H1 (cell line): ENCODE measurements at regions of chr7 and their contacts with region 1.

Region 1: DNA sequence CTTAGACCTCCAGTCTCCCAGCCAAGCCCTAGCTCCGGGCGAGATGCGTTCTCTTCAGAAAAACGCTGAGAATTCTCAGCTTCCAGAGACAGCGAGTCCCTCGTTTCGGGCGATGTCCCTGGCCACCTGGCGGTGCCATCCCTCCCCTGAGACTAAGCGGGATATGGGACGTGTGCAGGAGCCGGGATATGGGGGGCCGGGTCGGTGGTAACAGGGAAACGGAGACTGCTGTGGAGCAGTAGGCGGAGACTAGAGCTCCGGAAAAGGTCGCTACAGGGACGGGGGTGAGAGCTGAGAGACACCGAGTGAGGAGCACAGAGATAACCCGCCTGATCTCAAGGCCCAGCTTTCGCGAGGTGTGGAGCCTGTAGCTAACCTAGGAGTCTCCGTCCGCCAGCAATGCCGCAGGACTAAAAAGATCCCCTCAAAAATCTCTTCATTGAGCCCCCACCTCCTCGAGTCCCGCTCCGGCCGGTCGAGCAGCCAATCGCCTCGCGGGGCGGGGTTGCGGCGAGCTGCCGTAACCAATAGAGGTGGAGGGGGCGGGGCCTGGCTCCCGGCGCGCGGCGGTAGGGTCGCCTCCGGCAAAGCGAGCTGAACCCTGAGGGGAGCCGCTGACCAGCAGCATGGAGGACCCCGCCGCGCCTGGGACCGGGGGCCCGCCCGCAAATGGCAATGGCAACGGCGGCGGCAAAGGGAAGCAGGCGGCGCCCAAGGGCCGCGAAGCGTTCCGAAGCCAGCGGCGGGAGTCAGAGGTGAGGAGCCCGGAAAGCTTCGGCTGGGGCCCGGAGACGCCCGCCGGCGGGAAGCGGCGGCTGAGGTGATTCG is at the start of gene STRIP2:
- DNase-seq: peak; percentile 81 to 99
- H3K4me3 ChIP-seq: peak within 1 kb of the TSS; percentile 74 to 85 (median 76)
- H3K27ac ChIP-seq: 0 out of 2 replicates have a peak within 1 kb of the TSS, but pooled peaks have one; percentile 12
- H3K4me1 ChIP-seq: peaks cover 0 to 4% (median 2%) of the 10 kb centered on the region in 4 experiments; a peak in 3 of 7 replicates
- H3K27me3 ChIP-seq: peaks cover 0 to 9% (median 3%) of the 10 kb centered on the region in 4 experiments; a peak in 3 of 7 replicates
- CTCF ChIP-seq: peak; percentile 22 to 39 (median 34)
- EP300 ChIP-seq: no peak; a peak in 1 of 3 replicates
- POLR2A ChIP-seq: peak; percentile 78 to 82
- RAD21 ChIP-seq: peak in 1 of 2 experiments; percentile 14; a peak in 1 of 4 replicates
- total RNA-seq, gene STRIP2: 7.9 and 8.2 TPM in 2 replicates

Region 2: DNA sequence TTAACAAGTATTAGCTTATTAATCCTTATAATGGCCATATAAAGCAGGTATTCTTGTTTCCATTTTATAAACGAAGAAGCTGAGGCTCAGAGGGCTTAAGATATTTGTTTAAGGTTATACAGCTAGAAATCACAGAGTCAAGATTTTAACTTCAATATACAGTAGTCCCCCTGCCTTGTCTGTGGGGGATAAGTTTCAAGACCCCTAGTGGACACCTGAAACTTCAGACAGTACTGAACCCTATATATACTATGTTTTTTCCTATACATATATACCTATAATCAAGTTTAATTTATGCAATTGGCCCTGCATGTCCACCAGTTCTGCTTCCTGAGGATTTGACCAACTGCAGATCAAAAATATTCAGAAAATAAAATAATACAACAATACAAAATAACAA is 44.2 kb before region 1 on chr7:
- CTCF ChIA-PET with region 1: interaction called, 7 read pairs
- POLR2A ChIA-PET with region 1: interaction called, 13 read pairs
- DNase-seq: no peak
- H3K4me3 ChIP-seq: no peak overlapping the region
- H3K27ac ChIP-seq: no peak overlapping the region
- H3K4me1 ChIP-seq: peaks cover 0 to 5% (median 1%) of the 10 kb centered on the region in 4 experiments; a peak in 2 of 7 replicates
- H3K27me3 ChIP-seq: no peaks in the 10 kb centered on the region
- CTCF ChIP-seq: no peak
- EP300 ChIP-seq: no peak
- POLR2A ChIP-seq: no peak
- RAD21 ChIP-seq: no peak

Region 3: DNA sequence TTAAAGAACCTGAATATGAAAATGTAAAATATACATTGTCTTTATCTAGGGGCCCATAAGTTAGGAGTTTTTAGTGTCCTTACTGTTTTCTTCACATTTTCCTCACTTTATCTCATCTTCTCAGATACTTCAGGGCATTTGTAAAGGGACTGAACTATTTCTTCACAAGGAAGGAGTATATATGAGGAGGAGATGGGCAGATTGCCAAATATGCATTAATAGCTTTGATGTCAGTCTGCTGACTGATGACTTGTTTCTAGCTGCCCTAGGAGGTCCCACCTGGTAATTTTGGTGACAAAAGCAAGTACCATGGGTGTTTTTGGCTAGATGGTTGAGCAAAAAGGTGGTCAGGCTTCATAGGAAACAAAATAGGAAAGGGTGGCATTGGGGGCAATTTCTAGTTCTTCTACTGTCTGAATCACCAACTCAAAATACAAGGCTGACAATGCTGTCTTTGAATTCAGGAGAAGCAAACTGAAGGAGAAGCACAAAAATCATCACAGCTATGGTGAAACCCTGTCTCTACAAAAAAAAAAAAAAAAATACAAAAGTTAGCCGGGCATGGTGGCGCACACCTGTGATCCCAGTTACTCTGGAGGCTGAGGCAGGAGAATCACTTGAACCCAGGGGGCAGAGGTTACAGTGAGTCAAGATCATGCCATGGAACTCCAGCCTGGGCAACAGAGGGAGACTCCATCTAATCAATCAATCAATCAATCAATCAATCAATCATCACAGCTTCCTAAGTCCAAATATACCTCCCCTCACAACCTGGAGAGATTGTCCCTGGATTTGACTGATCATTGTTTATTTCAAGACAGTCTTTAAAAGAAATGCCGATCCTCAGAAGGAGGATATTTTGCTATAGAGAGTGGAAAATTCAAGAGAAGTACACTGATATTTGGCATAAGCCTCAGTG is 10.1 kb before region 1 on chr7:
- CTCF ChIA-PET with region 1: interaction called, 9 read pairs
- POLR2A ChIA-PET with region 1: interaction called, 18 read pairs
- DNase-seq: no peak
- H3K4me3 ChIP-seq: no peak overlapping the region
- H3K27ac ChIP-seq: no peak overlapping the region
- H3K4me1 ChIP-seq: no peaks in the 10 kb centered on the region
- H3K27me3 ChIP-seq: no peaks in the 10 kb centered on the region
- CTCF ChIP-seq: no peak
- EP300 ChIP-seq: no peak
- POLR2A ChIP-seq: no peak
- RAD21 ChIP-seq: no peak

Region 4: GRCh38 chr7:129468087-129468486 is 34.0 kb after region 1 on chr7:
- CTCF ChIA-PET with region 1: interaction called, 21 read pairs
- POLR2A ChIA-PET with region 1: interaction called, 3 read pairs
- DNase-seq: no peak
- H3K4me3 ChIP-seq: no peak overlapping the region
- H3K27ac ChIP-seq: no peak overlapping the region
- H3K4me1 ChIP-seq: peaks cover 0 to 8% (median 6%) of the 10 kb centered on the region in 4 experiments; a peak in 4 of 7 replicates
- H3K27me3 ChIP-seq: no peaks in the 10 kb centered on the region
- CTCF ChIP-seq: no peak
- EP300 ChIP-seq: no peak
- POLR2A ChIP-seq: no peak
- RAD21 ChIP-seq: no peak

Region 5: GRCh38 chr7:129940329-129940728 is 506.3 kb after region 1 on chr7:
- CTCF ChIA-PET with region 1: no interaction called
- POLR2A ChIA-PET with region 1: no interaction called
- DNase-seq: no peak
- H3K4me3 ChIP-seq: no peak overlapping the region
- H3K27ac ChIP-seq: no peak overlapping the region
- H3K4me1 ChIP-seq: peaks cover 0 to 2% (median 0%) of the 10 kb centered on the region in 4 experiments; a peak in 1 of 7 replicates
- H3K27me3 ChIP-seq: no peaks in the 10 kb centered on the region
- CTCF ChIP-seq: no peak
- EP300 ChIP-seq: no peak
- POLR2A ChIP-seq: no peak
- RAD21 ChIP-seq: no peak